Prostate gland (tissue), 2 donors: ENCODE measurements at regions of chr1 and their contacts with region 1.

Region 1: GRCh38 chr1:3012456-3013291 is 8.6 kb upstream of the ACTRT2 start:
- DNase-seq: peak; percentile 33
- H3K4me3 ChIP-seq: no peak overlapping the region
- H3K27ac ChIP-seq: no peak overlapping the region
- H3K4me1 ChIP-seq: no peaks in the 10 kb centered on the region
- H3K27me3 ChIP-seq: peaks cover 26% of the 10 kb centered on the region
- CTCF ChIP-seq: peak; percentile 54 to 93 (median 76)
- POLR2A ChIP-seq: no peak

Region 2: DNA sequence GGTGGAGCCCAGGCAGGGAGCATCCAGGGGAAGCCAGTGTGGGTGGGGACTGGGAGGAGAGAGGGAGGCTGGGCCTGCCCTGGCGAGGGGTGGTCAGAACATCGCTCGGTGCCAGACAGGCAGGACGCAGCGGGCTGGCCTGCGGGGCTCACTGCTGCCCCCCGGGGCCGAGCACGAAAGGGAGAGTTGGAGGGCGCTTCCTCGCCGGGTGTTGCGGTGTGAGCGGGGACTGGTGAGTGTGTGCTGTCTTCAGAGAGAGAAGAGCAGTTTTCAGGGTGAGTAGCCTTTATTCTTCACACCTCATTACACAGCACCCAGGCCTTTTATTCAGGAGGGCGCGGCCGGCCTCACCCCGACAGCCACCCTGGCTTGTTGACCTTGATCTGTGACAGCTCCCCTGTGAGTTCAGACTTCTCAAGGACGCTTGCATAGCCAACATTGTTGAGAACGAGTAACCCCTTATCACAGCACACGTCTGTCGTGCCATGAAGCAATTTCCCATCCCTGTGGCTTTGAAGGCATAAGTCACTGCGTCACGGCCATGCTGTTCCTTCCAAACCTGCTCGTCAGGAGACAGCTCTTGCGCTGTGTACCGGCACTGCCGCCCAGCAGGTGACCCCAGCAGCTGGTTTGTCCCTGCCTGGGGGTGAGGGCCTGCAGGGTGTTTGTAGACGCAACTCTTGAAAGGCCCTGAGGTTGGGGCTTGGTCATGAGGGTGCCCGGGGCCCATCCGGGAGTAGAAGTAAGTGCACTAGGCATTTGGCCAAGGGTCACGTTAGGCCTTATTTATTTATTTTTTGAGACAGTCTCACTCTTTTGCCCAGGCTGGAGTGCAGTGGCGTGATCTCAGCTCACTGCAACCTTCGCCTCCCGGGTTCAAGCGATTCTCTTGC is 907.8 kb before region 1 on chr1:
- intact Hi-C with region 1: no loop called
- DNase-seq: no peak
- H3K4me3 ChIP-seq: no peak overlapping the region
- H3K27ac ChIP-seq: no peak overlapping the region
- H3K4me1 ChIP-seq: no peaks in the 10 kb centered on the region
- H3K27me3 ChIP-seq: no peaks in the 10 kb centered on the region
- CTCF ChIP-seq: no peak
- POLR2A ChIP-seq: no peak

Region 3: DNA sequence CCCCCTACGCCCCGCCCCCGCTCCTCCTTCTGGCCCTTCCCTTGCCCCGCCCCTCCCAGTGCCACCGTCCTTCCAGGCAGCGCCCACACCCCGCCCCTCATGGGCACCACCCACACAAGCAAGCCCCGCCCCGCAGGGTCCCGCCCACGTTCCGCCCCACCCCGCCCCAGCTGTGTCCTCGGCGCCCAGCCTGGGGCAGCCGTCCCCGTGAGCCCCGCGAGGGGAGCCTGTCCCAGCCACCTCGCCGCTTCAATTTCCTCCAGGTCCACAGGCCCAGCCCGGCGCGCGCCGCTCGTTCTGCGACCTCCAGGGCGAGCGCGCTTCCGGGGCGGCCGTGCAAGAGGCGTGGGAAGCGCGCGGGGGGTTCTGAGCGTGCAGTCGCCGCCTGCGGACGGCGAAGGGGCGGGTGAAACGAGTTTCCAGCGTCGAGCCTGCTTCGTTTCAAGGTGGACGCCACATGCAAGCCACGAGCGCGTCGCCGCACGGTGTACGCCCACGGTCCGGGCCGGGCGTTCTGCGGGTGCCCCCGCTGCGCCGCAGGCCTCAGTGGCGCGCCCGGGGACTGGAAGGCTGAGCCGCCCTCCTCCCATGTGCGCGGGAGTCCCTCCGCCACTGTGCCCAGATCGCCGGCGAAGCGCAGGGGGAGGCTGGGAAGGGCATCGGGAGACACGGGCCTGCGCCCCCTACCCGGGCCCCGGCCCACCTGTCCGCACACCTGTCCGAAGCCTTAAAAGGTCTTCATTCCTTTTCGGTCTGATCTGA is 807.3 kb before region 1 on chr1:
- intact Hi-C with region 1: no loop called
- DNase-seq: peak; percentile 98
- H3K4me3 ChIP-seq: peak overlapping the region; percentile 36 to 37
- H3K27ac ChIP-seq: peak overlapping the region; percentile 71 to 80
- H3K4me1 ChIP-seq: peaks cover 23% of the 10 kb centered on the region
- H3K27me3 ChIP-seq: no peaks in the 10 kb centered on the region
- CTCF ChIP-seq: peak in 2 of 4 experiments; percentile 24 to 34
- POLR2A ChIP-seq: peak; percentile 70

Region 4: GRCh38 chr1:2215909-2216766 is 796.5 kb before region 1 on chr1:
- intact Hi-C with region 1: no loop called
- DNase-seq: no peak
- H3K4me3 ChIP-seq: no peak overlapping the region
- H3K27ac ChIP-seq: no peak overlapping the region
- H3K4me1 ChIP-seq: peaks cover 24% of the 10 kb centered on the region
- H3K27me3 ChIP-seq: no peaks in the 10 kb centered on the region
- CTCF ChIP-seq: no peak
- POLR2A ChIP-seq: no peak

Region 5: GRCh38 chr1:2840036-2840809 is 172.5 kb before region 1 on chr1:
- intact Hi-C with region 1: no loop called
- DNase-seq: no peak
- H3K4me3 ChIP-seq: no peak overlapping the region
- H3K27ac ChIP-seq: no peak overlapping the region
- H3K4me1 ChIP-seq: no peaks in the 10 kb centered on the region
- H3K27me3 ChIP-seq: no peaks in the 10 kb centered on the region
- CTCF ChIP-seq: no peak
- POLR2A ChIP-seq: no peak

Region 6: GRCh38 chr1:3410142-3410925 is 397.7 kb after region 1 on chr1:
- intact Hi-C with region 1: loop called (anchors 2 kb)
- DNase-seq: peak; percentile 62
- H3K4me3 ChIP-seq: no peak overlapping the region
- H3K27ac ChIP-seq: no peak overlapping the region
- H3K4me1 ChIP-seq: no peaks in the 10 kb centered on the region
- H3K27me3 ChIP-seq: peaks cover 31% of the 10 kb centered on the region
- CTCF ChIP-seq: peak; percentile 39 to 83 (median 76)
- POLR2A ChIP-seq: no peak